Left ventricle myocardium inferior (tissue), 1 donor: ENCODE measurements at regions of chr4 and their contacts with region 1.

Region 1: GRCh38 chr4:182806259-182807252 is 110.6 kb downstream of the DCTD start:
- DNase-seq: peak; percentile 78
- H3K4me3 ChIP-seq: peak overlapping the region; percentile 71
- H3K27ac ChIP-seq: peak overlapping the region; percentile 69
- H3K4me1 ChIP-seq: peaks cover 13% of the 10 kb centered on the region
- H3K27me3 ChIP-seq: peaks cover 19% of the 10 kb centered on the region
- CTCF ChIP-seq: peak; percentile 91

Region 2: GRCh38 chr4:182478475-182478874 is 328.1 kb before region 1 on chr4:
- intact Hi-C with region 1: loop called (anchors 10 kb)
- DNase-seq: no peak
- H3K4me3 ChIP-seq: no peak overlapping the region
- H3K27ac ChIP-seq: no peak overlapping the region
- H3K4me1 ChIP-seq: no peaks in the 10 kb centered on the region
- H3K27me3 ChIP-seq: no peaks in the 10 kb centered on the region
- CTCF ChIP-seq: peak; percentile 75

Region 3: DNA sequence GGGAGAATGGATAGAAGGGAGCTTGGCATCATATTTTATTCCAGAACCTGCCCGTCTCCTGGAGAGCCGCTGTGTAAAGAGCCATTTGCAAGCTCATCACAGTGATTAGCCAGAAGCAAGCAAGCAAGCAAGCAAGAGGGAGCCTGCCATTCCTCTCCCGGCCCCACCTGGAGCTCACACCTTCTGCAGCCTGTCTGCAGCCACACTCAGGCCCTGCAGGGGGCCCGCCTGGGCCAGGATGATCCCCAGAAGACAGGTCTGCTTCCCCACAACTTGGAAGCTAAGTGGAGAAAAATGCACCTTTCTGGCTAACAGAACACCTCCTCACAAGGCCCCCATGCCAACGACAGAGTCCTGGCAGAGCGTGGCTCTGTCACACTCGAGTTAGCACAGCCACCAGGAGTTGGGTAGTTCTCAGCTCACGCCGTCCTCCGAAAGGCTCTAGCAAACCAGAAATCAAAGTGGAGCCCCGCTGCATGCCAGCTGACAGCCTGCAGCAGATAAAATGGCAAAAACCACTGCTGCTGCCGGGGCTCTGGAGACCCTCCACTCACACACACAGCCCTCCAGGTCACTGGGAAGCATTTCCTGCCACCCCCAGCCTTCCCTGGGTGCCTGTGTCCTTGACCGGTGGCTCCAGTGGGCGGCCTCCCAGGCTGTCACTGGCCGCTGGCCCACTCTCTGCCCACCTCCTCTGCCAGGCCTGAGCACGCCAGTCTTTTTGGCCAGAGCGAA is 55.8 kb after region 1 on chr4:
- intact Hi-C with region 1: no loop called
- DNase-seq: no peak
- H3K4me3 ChIP-seq: no peak overlapping the region
- H3K27ac ChIP-seq: no peak overlapping the region
- H3K4me1 ChIP-seq: no peaks in the 10 kb centered on the region
- H3K27me3 ChIP-seq: no peaks in the 10 kb centered on the region
- CTCF ChIP-seq: no peak

Region 4: GRCh38 chr4:183158062-183158461 is 351.5 kb after region 1 on chr4:
- intact Hi-C with region 1: no loop called
- DNase-seq: no peak
- H3K4me3 ChIP-seq: no peak overlapping the region
- H3K27ac ChIP-seq: no peak overlapping the region
- H3K4me1 ChIP-seq: peaks cover 39% of the 10 kb centered on the region
- H3K27me3 ChIP-seq: no peaks in the 10 kb centered on the region
- CTCF ChIP-seq: no peak